ENCODE measurements at regions of chr19 and their contacts with region 1.

Region 1: DNA sequence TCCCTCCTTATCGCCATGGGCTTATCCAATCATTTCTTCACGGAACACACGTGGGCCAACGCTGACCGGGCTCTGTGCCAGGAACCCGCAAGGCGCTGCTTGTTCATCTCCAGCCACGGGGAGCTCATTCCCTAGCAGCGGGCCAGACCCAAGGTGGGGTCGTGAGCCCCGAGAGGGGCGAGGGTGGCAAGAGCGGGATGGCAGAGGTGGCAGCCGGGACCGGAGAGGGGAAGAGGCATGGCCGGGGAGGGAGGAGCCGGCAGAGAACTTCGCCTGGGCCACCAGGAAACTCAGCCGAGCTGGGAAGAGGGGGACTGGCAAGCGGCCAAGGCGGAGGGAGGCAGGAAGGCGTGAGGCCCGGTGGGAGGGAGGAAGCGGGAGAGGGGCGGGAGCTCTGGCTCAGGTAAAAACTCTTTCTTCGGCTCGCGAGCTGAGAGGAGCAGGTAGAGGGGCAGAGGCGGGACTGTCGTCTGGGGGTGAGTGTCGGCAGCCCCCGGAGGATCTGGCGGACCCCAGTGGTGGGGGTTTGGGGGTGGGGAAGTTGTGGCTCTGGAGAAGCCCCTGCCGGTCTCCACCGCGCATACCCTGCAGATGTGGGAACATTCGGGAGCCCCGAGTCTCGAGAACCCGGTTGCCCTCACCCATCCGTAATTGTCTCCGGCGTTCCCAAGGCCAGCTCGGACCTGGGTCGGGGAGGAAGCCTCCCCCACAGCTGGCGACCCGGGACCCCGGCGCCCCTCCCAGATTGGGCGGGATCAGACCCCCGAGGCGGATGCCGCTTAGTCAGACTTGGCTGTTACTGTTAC is at the start of gene B3GNT3:
- DNase-seq: peak; percentile 83
- ATAC-seq: peak; percentile 50
- H3K4me3 ChIP-seq: peak within 1 kb of the TSS; percentile 75 to 90
- H3K27ac ChIP-seq: peak within 1 kb of the TSS; percentile 84
- H3K4me1 ChIP-seq: peaks cover 64 to 92% of the 10 kb centered on the region in 2 experiments
- H3K27me3 ChIP-seq: no peaks in the 10 kb centered on the region
- CTCF ChIP-seq: no peak
- POLR2A ChIP-seq: peak; percentile 42
- RAD21 ChIP-seq: no peak
- total RNA-seq, gene B3GNT3: 22.2 TPM

Region 2: GRCh38 chr19:17830567-17831418 is 35.9 kb after region 1 on chr19:
- CTCF ChIA-PET with region 1: no interaction called
- POLR2A ChIA-PET with region 1: interaction called, 20 read pairs
- RAD21 ChIA-PET with region 1: no interaction called
- intact Hi-C with region 1: no loop called
- DNase-seq: peak; percentile 91
- ATAC-seq: peak; percentile 85
- H3K4me3 ChIP-seq: peak overlapping the region; percentile 66 to 74
- H3K27ac ChIP-seq: peak overlapping the region; percentile 97
- H3K4me1 ChIP-seq: peaks cover 15 to 34% of the 10 kb centered on the region in 2 experiments
- H3K27me3 ChIP-seq: no peaks in the 10 kb centered on the region
- CTCF ChIP-seq: no peak
- POLR2A ChIP-seq: no peak
- RAD21 ChIP-seq: no peak

Region 3: DNA sequence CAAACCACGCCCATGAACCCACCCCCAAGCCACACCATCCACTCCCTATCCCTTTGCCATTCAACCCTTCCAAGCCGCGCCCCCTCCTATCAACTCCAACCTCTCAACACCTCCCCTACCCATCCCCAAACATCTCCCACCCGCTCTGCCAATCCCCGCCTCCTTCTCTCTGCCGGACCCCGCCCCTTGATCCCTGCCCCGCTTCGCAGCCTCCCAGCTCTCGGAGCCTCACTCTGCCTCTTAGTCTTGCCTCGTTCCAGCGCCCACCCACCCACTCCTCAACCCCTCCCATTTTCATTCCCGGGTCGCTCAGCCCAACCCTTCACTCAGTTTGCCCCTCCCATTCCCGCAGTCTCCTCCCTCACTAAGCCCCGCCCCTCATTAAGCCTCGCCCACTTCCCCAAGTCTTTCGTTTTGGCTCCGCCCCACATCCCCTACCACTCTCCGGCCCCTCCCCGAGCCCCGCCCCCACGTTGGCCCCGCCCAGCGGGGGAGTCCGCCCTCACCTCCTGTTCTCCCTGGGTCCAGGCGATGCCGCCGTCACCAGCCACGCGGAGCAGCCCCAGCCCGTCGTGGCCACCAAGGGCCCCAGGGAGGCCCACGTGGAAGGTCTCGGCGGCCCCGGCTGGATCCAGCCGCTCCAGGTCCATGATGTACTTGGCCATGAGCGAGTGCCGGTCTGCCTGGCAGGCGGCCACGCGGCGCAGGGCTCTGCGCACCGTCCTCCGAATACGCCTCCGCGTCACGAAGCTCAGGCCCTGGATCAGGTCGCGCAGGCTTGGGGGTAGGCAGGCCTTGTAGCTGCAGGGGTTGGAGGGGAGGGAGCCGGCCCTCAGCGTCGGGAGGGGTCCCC is 47.1 kb after region 1 on chr19:
- CTCF ChIA-PET with region 1: no interaction called
- POLR2A ChIA-PET with region 1: interaction called, 3 read pairs
- RAD21 ChIA-PET with region 1: interaction called in 1 of 2 experiments, 3 read pairs
- intact Hi-C with region 1: loop called (anchors 5 kb)
- DNase-seq: peak; percentile 92
- ATAC-seq: peak; percentile 89
- H3K4me3 ChIP-seq: peak overlapping the region; percentile 83 to 93
- H3K27ac ChIP-seq: peak overlapping the region; percentile 93
- H3K4me1 ChIP-seq: peaks cover 9 to 30% of the 10 kb centered on the region in 2 experiments; a peak in 3 of 4 replicates
- H3K27me3 ChIP-seq: no peaks in the 10 kb centered on the region
- CTCF ChIP-seq: no peak
- POLR2A ChIP-seq: peak; percentile 64
- RAD21 ChIP-seq: no peak

Measured in HCT116 (cell line).